HepG2 (cell line): ENCODE measurements at regions of chr9 and their contacts with region 1.

Region 1: GRCh38 chr9:17402309-17402708 is 176.6 kb upstream of the SH3GL2 start:
- DNase-seq: peak; percentile 19
- ATAC-seq: peak; percentile 50; the same call in 2 of the 3 replicates
- H3K4me3 ChIP-seq: no peak overlapping the region
- H3K27ac ChIP-seq: no peak overlapping the region
- H3K4me1 ChIP-seq: no peaks in the 10 kb centered on the region
- H3K27me3 ChIP-seq: no peaks in the 10 kb centered on the region
- CTCF ChIP-seq: 0 out of 2 replicates have a peak, but pooled peaks have one; percentile 18
- EP300 ChIP-seq: no peak
- POLR2A ChIP-seq: no peak
- RAD21 ChIP-seq: no peak

Region 2: DNA sequence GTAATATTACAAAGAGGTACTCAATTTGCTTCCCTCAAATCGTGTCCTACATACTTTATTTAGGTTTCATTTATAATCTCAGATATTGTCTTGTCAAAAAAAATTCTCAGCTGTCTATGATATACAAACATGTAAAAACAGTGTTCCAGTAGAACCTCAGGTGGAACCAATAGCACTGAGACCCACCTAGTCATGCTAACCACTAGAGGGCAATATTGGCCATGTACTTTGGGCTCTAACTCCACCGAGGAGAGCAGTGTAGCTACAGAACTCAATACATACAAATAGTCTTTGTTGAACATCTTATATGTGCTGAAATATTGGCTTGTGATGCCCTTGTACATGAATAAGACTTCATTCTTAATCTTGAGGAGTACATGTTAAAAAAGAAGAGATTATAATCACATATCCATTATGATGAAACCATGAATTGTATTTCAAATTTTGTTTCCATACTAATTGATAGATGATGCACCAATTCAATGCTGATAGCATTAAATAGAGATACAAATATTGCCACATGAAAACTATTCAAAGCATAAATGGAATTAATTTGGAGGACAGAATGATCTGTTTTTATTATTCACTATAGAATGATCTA is 338.7 kb before region 1 on chr9:
- CTCF ChIA-PET with region 1: no interaction called
- POLR2A ChIA-PET with region 1: no interaction called
- in situ Hi-C with region 1: no loop called
- intact Hi-C with region 1: loop called (anchors 2 kb)
- DNase-seq: peak; percentile 45
- ATAC-seq: peak; percentile 98
- H3K4me3 ChIP-seq: no peak overlapping the region
- H3K27ac ChIP-seq: no peak overlapping the region
- H3K4me1 ChIP-seq: no peaks in the 10 kb centered on the region
- H3K27me3 ChIP-seq: no peaks in the 10 kb centered on the region
- CTCF ChIP-seq: peak; percentile 78
- EP300 ChIP-seq: no peak
- POLR2A ChIP-seq: no peak
- RAD21 ChIP-seq: no peak

Region 3: DNA sequence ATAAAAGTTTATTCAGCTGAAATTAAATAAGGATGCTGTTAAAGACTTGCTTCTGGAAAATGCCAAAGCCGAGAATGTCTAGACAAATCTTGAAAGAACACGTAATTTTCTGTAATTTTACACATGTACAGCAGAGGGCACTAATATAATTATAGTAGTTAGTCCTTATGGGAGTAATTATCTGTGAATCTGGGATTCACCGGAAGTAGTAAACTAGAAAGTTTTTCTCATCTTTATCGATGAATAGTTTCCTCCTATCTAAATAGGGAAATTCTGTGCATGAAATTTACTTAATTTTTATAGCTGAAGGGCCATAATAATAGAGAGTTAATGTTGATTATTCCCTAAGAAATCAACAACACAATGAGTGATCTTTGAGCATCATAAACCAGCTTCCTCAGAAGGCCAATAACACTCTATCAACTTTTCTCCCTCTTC is 285.9 kb before region 1 on chr9:
- CTCF ChIA-PET with region 1: interaction called, 6 read pairs
- POLR2A ChIA-PET with region 1: no interaction called
- in situ Hi-C with region 1: no loop called
- intact Hi-C with region 1: loop called (anchors 1 kb)
- DNase-seq: peak; percentile 20
- ATAC-seq: no peak
- H3K4me3 ChIP-seq: 0 out of 6 replicates have a peak overlapping the region, but pooled peaks of 1 of the 3 experiments have one; percentile 19
- H3K27ac ChIP-seq: no peak overlapping the region
- H3K4me1 ChIP-seq: peaks cover 7% of the 10 kb centered on the region
- H3K27me3 ChIP-seq: no peaks in the 10 kb centered on the region
- CTCF ChIP-seq: peak; percentile 37
- EP300 ChIP-seq: no peak
- POLR2A ChIP-seq: no peak
- RAD21 ChIP-seq: no peak

Region 4: DNA sequence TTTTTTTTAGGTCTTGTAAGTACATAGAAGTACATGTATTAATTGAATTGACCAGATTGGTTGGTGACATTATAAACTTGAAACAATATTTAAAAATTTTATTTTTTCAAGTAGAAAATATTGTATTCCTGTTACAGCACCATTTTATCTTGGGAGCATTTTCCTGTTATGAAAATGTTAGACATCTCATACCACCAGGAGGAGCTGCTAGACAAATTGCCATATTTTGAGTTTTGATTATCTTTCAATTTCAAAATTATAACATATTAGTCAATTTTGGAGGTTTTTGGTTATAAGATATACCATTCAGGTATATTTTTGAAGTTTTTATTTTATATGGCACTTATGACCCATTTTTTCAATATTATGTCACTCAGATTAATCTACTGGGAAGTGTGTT is 183.0 kb before region 1 on chr9:
- CTCF ChIA-PET with region 1: interaction called, 4 read pairs
- POLR2A ChIA-PET with region 1: no interaction called
- in situ Hi-C with region 1: no loop called
- intact Hi-C with region 1: loop called (anchors 1 kb)
- DNase-seq: no peak
- ATAC-seq: no peak
- H3K4me3 ChIP-seq: no peak overlapping the region
- H3K27ac ChIP-seq: no peak overlapping the region
- H3K4me1 ChIP-seq: no peaks in the 10 kb centered on the region
- H3K27me3 ChIP-seq: no peaks in the 10 kb centered on the region
- CTCF ChIP-seq: no peak
- EP300 ChIP-seq: no peak
- POLR2A ChIP-seq: no peak
- RAD21 ChIP-seq: no peak